Panc1 (cell line): ENCODE measurements at regions of chr12 and their contacts with region 1.

Region 1: DNA sequence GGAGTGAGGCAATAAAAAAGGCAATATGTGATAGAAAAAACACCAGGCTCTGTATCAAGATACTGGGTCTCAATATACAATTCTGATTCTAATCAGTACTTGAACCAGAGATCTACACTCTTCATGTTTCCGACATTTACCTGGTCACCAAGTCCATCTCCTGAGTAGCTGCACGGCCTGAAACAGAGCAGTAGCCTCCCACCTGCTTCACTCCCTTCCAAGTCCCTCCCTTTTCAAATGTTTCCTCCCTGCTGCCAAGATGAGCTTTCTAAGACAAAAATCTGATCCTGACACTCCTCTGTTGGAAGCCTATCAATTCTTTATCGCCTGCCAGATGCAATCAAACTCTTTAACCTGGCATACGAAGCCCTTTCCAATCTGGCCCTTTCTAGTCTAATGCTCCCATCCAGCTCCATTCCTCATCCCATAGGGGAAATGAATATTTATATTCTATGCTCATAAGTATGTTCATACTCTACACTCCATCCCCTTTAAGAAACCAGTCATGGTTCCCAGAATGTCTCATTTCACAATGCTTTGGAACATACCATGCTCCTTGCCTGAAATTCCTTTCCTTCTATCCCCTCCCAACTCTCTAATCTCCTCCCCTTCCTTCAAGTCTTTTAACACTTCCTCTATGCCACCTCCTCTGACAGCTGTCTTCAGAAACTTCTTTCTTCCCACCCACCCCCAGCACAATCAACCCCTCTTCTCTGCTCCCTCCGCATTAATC is 207.1 kb upstream of the CAND1 start:
- DNase-seq: no peak
- ATAC-seq: no peak
- H3K4me3 ChIP-seq: no peak overlapping the region
- H3K27ac ChIP-seq: no peak overlapping the region
- H3K4me1 ChIP-seq: no peaks in the 10 kb centered on the region
- H3K27me3 ChIP-seq: peaks cover 7% of the 10 kb centered on the region
- CTCF ChIP-seq: no peak

Region 2: DNA sequence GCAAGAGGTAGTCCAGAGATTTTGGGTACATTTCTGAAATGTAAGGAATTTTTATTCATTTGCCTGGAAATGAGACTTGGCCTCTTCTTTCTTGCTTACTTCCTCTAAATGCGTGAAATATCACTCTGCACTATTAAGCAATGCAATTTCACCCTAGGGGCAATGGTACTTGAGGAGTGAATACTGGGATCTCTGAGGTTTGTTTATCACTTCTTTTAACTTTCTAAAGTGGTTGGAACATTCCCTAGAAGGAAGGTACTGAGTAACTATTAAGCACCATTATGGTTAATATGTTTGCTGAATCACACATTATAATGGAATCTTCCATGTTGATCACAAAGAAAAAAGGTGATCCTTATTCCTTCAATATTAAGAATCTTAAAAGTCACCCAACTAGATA is 86.2 kb after region 1 on chr12:
- CTCF ChIA-PET with region 1: no interaction called
- POLR2A ChIA-PET with region 1: interaction called, 12 read pairs
- in situ Hi-C with region 1: no loop called
- intact Hi-C with region 1: no loop called
- DNase-seq: no peak
- ATAC-seq: no peak
- H3K4me3 ChIP-seq: no peak overlapping the region
- H3K27ac ChIP-seq: no peak overlapping the region
- H3K4me1 ChIP-seq: no peaks in the 10 kb centered on the region
- H3K27me3 ChIP-seq: no peaks in the 10 kb centered on the region
- CTCF ChIP-seq: no peak

Region 3: GRCh38 chr12:67315661-67316060 is 253.6 kb after region 1 on chr12:
- CTCF ChIA-PET with region 1: no interaction called
- POLR2A ChIA-PET with region 1: no interaction called
- in situ Hi-C with region 1: no loop called
- intact Hi-C with region 1: no loop called
- DNase-seq: no peak
- ATAC-seq: no peak
- H3K4me3 ChIP-seq: no peak overlapping the region
- H3K27ac ChIP-seq: no peak overlapping the region
- H3K4me1 ChIP-seq: no peaks in the 10 kb centered on the region
- H3K27me3 ChIP-seq: no peaks in the 10 kb centered on the region
- CTCF ChIP-seq: no peak

Region 4: GRCh38 chr12:67671382-67671781 is 609.4 kb after region 1 on chr12:
- CTCF ChIA-PET with region 1: no interaction called
- POLR2A ChIA-PET with region 1: no interaction called
- in situ Hi-C with region 1: no loop called
- intact Hi-C with region 1: no loop called
- DNase-seq: no peak
- ATAC-seq: no peak
- H3K4me3 ChIP-seq: no peak overlapping the region
- H3K27ac ChIP-seq: no peak overlapping the region
- H3K4me1 ChIP-seq: no peaks in the 10 kb centered on the region
- H3K27me3 ChIP-seq: no peaks in the 10 kb centered on the region
- CTCF ChIP-seq: no peak

Region 5: GRCh38 chr12:67921286-67921685 is 859.3 kb after region 1 on chr12:
- CTCF ChIA-PET with region 1: interaction called, 12 read pairs
- POLR2A ChIA-PET with region 1: no interaction called
- in situ Hi-C with region 1: no loop called
- intact Hi-C with region 1: no loop called
- DNase-seq: no peak
- ATAC-seq: no peak
- H3K4me3 ChIP-seq: no peak overlapping the region
- H3K27ac ChIP-seq: no peak overlapping the region
- H3K4me1 ChIP-seq: no peaks in the 10 kb centered on the region
- H3K27me3 ChIP-seq: peaks cover 2% of the 10 kb centered on the region; the same call in 1 of the 2 replicates
- CTCF ChIP-seq: no peak